Heart left ventricle (tissue), 16 donors: ENCODE measurements at regions of chr20 and their contacts with region 1.

Region 1: DNA sequence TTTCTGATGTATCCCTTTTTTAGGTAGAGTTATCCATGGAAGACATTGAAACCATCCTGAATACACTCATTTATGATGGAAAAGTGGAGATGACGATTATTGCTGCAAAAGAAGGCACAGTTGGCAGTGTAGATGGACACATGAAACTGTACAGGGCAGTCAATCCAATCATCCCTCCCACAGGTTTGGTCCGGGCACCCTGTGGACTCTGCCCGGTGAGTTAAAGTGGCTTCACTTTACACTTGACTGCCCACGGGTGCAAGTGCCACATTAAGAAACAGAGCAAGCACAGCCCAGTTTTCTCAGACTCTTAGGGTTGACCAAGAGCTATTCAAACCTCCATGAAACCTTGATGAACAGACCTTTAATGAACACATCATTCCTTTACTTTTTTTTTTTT is 14.4 kb downstream of the POLR3F start:
- DNase-seq: no peak
- ATAC-seq: no peak
- H3K4me3 ChIP-seq: no peak overlapping the region
- H3K27ac ChIP-seq: no peak overlapping the region
- H3K4me1 ChIP-seq: no peaks in the 10 kb centered on the region
- H3K27me3 ChIP-seq: no peaks in the 10 kb centered on the region
- CTCF ChIP-seq: no peak
- POLR2A ChIP-seq: no peak

Region 2: GRCh38 chr20:18543932-18544331 is 62.3 kb after region 1 on chr20:
- intact Hi-C with region 1: loop called in 1 of 10 experiments (anchors 10 kb)
- DNase-seq: peak in 4 of 5 donors; percentile 18 to 69 (median 60)
- ATAC-seq: peak in 3 of 4 donors; percentile 47 to 89 (median 68)
- H3K4me3 ChIP-seq: no peak overlapping the region
- H3K27ac ChIP-seq: no peak overlapping the region
- H3K4me1 ChIP-seq: no peaks in the 10 kb centered on the region
- H3K27me3 ChIP-seq: no peaks in the 10 kb centered on the region
- CTCF ChIP-seq: no peak
- POLR2A ChIP-seq: no peak